ENCODE measurements at regions of chr6 and their contacts with region 1.

Region 1: GRCh38 chr6:106275692-106276091 is 49.9 kb downstream of the ATG5 start:
- DNase-seq: no peak
- H3K4me3 ChIP-seq: no peak overlapping the region
- H3K27ac ChIP-seq: no peak overlapping the region
- H3K4me1 ChIP-seq: no peaks in the 10 kb centered on the region
- H3K27me3 ChIP-seq: no peaks in the 10 kb centered on the region
- CTCF ChIP-seq: no peak

Region 2: DNA sequence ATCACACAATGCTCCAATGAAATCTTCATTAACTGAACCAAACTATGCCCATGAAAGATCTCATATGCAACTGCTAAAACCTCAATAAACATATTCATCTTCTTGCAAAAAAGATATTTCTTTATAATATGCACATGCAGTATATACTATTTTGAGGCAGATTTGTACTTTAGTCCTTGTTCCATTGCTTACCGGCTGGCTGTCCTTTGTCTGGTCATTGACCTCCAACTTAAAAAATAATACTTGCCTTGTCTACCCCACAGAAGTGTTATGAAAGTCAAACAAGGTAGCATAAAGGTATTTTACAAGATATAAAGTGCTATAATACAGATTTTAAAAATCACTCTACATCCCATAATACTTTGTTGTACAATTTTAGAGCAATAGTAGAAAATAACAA is 38.4 kb before region 1 on chr6:
- CTCF ChIA-PET with region 1: no interaction called
- POLR2A ChIA-PET with region 1: no interaction called
- intact Hi-C with region 1: no loop called
- DNase-seq: no peak
- H3K4me3 ChIP-seq: no peak overlapping the region
- H3K27ac ChIP-seq: no peak overlapping the region
- H3K4me1 ChIP-seq: no peaks in the 10 kb centered on the region
- H3K27me3 ChIP-seq: no peaks in the 10 kb centered on the region
- CTCF ChIP-seq: no peak

Region 3: GRCh38 chr6:106263416-106263815 is 12.3 kb before region 1 on chr6:
- CTCF ChIA-PET with region 1: interaction called, 4 read pairs
- POLR2A ChIA-PET with region 1: interaction called, 11 read pairs
- intact Hi-C with region 1: no loop called
- DNase-seq: no peak
- H3K4me3 ChIP-seq: no peak overlapping the region
- H3K27ac ChIP-seq: no peak overlapping the region
- H3K4me1 ChIP-seq: no peaks in the 10 kb centered on the region; the same call in 1 of the 2 replicates
- H3K27me3 ChIP-seq: no peaks in the 10 kb centered on the region
- CTCF ChIP-seq: no peak

Region 4: GRCh38 chr6:106287205-106287604 is 11.5 kb after region 1 on chr6:
- CTCF ChIA-PET with region 1: no interaction called
- POLR2A ChIA-PET with region 1: interaction called, 11 read pairs
- intact Hi-C with region 1: no loop called
- DNase-seq: no peak
- H3K4me3 ChIP-seq: no peak overlapping the region
- H3K27ac ChIP-seq: no peak overlapping the region
- H3K4me1 ChIP-seq: no peaks in the 10 kb centered on the region
- H3K27me3 ChIP-seq: no peaks in the 10 kb centered on the region
- CTCF ChIP-seq: no peak

Measured in PC-9 (cell line).